ENCODE measurements at regions of chr3 and their contacts with region 1.

Region 1: DNA sequence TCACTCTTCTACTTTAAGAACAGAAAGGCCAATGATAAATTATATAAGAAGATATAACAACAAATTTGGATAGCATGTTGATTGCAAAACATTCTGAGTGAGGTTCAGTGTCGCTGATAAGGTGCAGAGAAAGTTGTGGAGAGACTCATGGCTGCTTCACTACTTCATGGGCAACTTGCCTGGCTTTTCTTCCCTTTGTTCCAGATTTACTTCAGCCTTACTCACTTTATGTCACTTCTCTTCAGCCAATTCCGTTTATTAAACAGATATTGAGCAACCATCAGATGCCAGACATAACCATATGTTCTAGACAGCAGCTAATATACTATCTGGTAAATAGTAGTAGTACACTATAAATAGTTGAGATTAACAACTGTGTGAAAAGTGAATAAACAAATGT is 150.0 kb upstream of the CHL1 start:
- DNase-seq: no peak
- H3K4me3 Mint-ChIP-seq: no peak overlapping the region
- H3K27ac Mint-ChIP-seq: no peak overlapping the region
- H3K4me1 Mint-ChIP-seq: peaks cover 7% of the 10 kb centered on the region
- H3K27me3 Mint-ChIP-seq: no peaks in the 10 kb centered on the region
- CTCF ChIP-seq: no peak

Region 2: GRCh38 chr3:63095-63765 is 16.7 kb after region 1 on chr3:
- CTCF ChIA-PET with region 1: no interaction called
- intact Hi-C with region 1: no loop called
- DNase-seq: peak; percentile 24
- H3K4me3 Mint-ChIP-seq: no peak overlapping the region
- H3K27ac Mint-ChIP-seq: no peak overlapping the region
- H3K4me1 Mint-ChIP-seq: no peaks in the 10 kb centered on the region
- H3K27me3 Mint-ChIP-seq: no peaks in the 10 kb centered on the region
- CTCF ChIP-seq: no peak

Region 3: GRCh38 chr3:377158-377561 is 330.6 kb after region 1 on chr3:
- CTCF ChIA-PET with region 1: no interaction called
- intact Hi-C with region 1: loop called (anchors 1 kb)
- DNase-seq: no peak
- H3K4me3 Mint-ChIP-seq: no peak overlapping the region
- H3K27ac Mint-ChIP-seq: no peak overlapping the region
- H3K4me1 Mint-ChIP-seq: no peaks in the 10 kb centered on the region
- H3K27me3 Mint-ChIP-seq: no peaks in the 10 kb centered on the region
- CTCF ChIP-seq: no peak

Region 4: GRCh38 chr3:525415-525814 is 478.8 kb after region 1 on chr3:
- CTCF ChIA-PET with region 1: no interaction called
- intact Hi-C with region 1: no loop called
- DNase-seq: peak; percentile 5
- H3K4me3 Mint-ChIP-seq: no peak overlapping the region
- H3K27ac Mint-ChIP-seq: no peak overlapping the region
- H3K4me1 Mint-ChIP-seq: peaks cover 17% of the 10 kb centered on the region
- H3K27me3 Mint-ChIP-seq: no peaks in the 10 kb centered on the region
- CTCF ChIP-seq: no peak